Right ventricle myocardium inferior (tissue), 1 donor: ENCODE measurements at regions of chr2 and their contacts with region 1.

Region 1: GRCh38 chr2:176653479-176654443 is 384.5 kb downstream of the MTX2 start:
- DNase-seq: peak; percentile 57
- ATAC-seq: peak; percentile 88

Region 2: DNA sequence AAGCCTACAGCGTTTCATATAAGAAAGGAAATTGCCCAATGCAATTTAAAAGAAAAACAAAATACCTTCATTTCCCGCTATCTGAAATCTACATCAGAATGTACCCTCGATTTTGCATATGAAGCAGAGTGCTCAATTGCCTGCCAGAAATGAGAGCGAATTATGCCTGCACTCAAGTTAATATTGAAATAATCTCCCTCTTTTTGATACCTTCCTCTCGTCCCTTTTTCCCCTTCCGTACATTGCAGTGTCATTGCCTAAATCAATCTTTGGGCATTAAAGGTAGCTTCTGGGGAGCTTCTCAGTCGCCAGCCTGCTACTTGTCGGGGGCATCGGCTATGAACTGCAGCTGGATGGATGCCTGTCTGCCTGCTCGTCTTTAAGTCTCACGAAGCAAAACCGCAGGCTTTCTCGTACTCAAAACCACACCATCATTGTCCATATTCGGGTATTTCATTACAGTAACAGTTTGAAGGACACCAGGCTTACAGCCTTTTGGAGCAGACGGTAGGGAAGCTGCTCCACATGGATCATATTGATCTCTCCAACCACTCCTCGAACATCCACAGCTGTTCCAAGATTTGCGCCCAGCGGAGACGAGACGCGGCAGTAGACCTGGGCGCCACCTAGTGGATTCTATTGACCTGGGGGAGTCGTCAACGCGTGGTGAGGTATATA is 494.9 kb after region 1 on chr2:
- intact Hi-C with region 1: loop called (anchors 10 kb)
- DNase-seq: peak; percentile 81
- ATAC-seq: peak; percentile 72